Calu3 (cell line): ENCODE measurements at regions of chr6 and their contacts with region 1.

Region 1: DNA sequence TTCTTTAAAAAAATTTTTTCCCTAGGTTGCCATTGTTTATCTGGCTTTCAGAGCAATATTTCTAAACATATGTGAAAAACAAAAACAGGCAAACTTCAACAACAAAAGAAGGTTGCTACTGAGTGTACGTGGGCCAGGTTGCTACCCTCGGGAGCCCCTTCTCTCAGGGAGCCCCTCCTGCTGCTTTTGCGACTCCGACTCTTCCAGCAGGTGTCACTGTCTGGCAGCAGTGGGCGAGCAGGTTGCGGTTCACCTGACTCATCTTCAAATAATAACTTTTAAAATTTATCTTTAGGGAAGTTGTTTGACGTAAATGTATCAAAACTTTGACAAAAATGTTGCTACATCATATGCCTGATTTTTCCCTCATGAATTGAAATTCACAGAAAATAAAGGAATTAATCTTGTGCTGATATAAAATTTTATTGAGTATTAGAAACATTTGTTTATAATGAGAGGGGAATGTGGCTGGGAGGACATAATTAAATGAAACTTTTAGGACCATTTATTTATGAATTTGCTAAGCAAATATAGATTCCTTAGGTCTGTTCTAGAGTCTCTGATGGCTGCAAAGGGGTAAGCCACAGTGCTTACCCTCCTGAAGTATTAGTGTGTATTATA is 138.8 kb downstream of the HIVEP1 start:
- DNase-seq: peak; percentile 56
- H3K4me3 Mint-ChIP-seq: no peak overlapping the region
- H3K27ac Mint-ChIP-seq: no peak overlapping the region
- H3K4me1 Mint-ChIP-seq: peaks cover 25% of the 10 kb centered on the region
- H3K27me3 Mint-ChIP-seq: no peaks in the 10 kb centered on the region
- CTCF ChIP-seq: peak; percentile 62

Region 2: GRCh38 chr6:12233693-12234571 is 83.0 kb after region 1 on chr6:
- CTCF ChIA-PET with region 1: no interaction called
- intact Hi-C with region 1: loop called (anchors 2 kb)
- DNase-seq: peak; percentile 29
- H3K4me3 Mint-ChIP-seq: no peak overlapping the region
- H3K27ac Mint-ChIP-seq: no peak overlapping the region
- H3K4me1 Mint-ChIP-seq: peaks cover 8% of the 10 kb centered on the region
- H3K27me3 Mint-ChIP-seq: no peaks in the 10 kb centered on the region
- CTCF ChIP-seq: peak; percentile 64

Region 3: DNA sequence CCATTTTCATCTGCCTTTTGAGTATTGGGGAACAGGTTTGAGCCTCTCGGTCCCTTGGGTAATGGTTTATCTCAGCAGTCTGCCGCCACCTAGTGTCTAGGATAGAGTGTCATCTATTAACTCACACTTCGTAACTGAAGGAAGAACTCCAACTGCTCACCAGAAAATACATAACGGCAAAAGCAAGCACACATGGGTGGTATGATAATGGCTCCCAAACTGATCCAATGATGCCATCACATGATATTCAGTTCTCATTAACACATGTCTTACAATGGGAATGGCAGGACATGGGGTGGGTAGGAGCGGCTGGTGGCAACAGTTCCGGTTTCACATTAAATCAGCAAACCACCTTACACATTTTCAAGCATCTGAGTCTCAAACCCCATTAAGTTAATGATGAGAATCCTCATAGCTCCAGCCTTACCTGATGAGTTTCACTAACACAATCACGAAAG is 455.0 kb after region 1 on chr6:
- CTCF ChIA-PET with region 1: no interaction called
- intact Hi-C with region 1: loop called (anchors 2 kb)
- DNase-seq: peak; percentile 60
- H3K4me3 Mint-ChIP-seq: no peak overlapping the region
- H3K27ac Mint-ChIP-seq: no peak overlapping the region
- H3K4me1 Mint-ChIP-seq: peaks cover 15% of the 10 kb centered on the region
- H3K27me3 Mint-ChIP-seq: no peaks in the 10 kb centered on the region
- CTCF ChIP-seq: peak; percentile 58

Region 4: GRCh38 chr6:12637960-12638641 is 487.2 kb after region 1 on chr6:
- CTCF ChIA-PET with region 1: no interaction called
- intact Hi-C with region 1: loop called (anchors 10 kb)
- DNase-seq: peak; percentile 66
- H3K4me3 Mint-ChIP-seq: no peak overlapping the region
- H3K27ac Mint-ChIP-seq: peak overlapping the region; percentile 19
- H3K4me1 Mint-ChIP-seq: peaks cover 8% of the 10 kb centered on the region
- H3K27me3 Mint-ChIP-seq: peaks cover 23% of the 10 kb centered on the region
- CTCF ChIP-seq: peak; percentile 56